Sciatic nerve (tissue), 2 donors: ENCODE measurements at regions of chr7 and their contacts with region 1.

Region 1: GRCh38 chr7:22559829-22560489 is 60.0 kb upstream of the STEAP1B start:
- DNase-seq: peak; percentile 81
- ATAC-seq: peak; percentile 79

Region 2: DNA sequence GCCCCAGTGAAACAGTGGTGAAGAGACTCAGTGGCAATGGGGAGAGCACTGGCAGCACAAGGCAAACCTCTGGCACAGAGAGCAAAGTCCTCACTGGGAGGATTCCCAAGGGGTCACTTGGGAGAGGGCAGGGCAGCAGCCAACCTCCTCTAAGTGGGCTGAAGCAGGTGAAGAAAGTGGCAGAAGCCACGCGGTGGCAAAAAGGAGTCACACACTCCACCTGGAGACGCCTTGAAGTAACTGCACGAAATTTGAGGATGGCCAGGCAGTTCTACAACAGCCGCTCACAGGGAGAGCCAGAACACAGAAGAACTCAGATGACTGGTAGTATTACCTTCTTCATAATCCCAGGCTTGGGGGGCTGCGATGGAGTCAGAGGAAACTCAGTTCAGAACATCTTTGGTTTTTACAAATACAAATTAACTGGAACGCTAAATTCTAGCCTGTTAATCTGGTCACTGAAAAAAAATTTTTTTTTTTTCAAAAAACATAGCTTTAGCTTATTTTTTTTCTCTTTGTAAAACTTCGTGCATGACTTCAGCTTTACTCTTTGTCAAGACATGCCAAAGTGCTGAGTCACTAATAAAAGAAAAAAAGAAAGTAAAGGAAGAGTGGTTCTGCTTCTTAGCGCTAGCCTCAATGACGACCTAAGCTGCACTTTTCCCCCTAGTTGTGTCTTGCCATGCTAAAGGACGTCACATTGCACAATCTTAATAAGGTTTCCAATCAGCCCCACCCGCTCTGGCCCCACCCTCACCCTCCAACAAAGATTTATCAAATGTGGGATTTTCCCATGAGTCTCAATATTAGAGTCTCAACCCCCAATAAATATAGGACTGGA is 166.6 kb after region 1 on chr7:
- intact Hi-C with region 1: loop called (anchors 10 kb)
- DNase-seq: no peak
- ATAC-seq: peak; percentile 81

Region 3: GRCh38 chr7:23055582-23056178 is 495.7 kb after region 1 on chr7:
- intact Hi-C with region 1: loop called (anchors 10 kb)
- DNase-seq: no peak
- ATAC-seq: peak; percentile 85